Thyroid gland (tissue), 4 donors: ENCODE measurements at regions of chr19 and their contacts with region 1.

Region 1: GRCh38 chr19:15149737-15150136 is 42.5 kb downstream of the SYDE1 start:
- DNase-seq: no peak
- H3K4me3 ChIP-seq: no peak overlapping the region
- H3K27ac ChIP-seq: no peak overlapping the region
- H3K4me1 ChIP-seq: no peaks in the 10 kb centered on the region
- H3K27me3 ChIP-seq: no peaks in the 10 kb centered on the region
- CTCF ChIP-seq: no peak
- POLR2A ChIP-seq: no peak

Region 2: DNA sequence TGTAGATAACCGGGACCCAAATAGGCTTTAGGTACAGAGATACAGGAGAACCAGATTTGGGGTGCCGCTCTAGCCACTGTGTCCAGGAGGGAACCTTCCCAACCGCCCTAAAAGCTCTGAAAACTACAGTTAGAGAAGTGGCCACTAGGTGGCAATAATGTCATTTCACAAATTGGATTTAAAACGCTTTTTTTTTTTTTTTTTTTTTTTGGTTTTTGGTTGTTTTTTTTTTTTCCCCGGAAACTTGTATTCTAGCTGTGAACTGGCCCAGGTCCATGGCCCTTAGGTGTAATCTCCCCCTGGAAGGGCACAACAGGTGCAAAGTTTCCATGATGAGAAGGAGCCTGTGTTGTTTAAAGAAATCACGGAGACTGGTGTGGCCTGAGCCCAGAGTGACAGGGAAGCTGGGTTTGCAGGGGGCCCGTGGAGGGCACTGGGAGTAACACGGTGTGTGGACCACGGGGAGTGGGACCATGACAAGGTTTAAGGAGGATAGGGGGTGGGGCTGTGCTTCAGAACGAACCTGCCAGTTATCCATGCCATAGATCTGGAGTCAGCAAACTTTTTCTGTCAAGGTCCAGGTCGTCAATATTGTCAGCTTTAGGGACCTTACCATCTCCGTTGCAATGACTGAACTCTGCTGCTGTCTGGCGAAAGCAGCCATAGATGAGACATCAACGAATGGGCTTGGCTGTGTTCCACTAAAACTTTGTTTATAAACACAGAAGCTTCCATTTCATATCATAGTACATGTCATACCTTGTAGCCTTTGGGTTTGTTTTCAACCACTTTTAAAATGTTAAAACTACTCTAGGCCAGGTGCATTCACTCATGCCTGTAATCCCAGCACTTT is 57.6 kb before region 1 on chr19:
- intact Hi-C with region 1: loop called (anchors 2 kb)
- DNase-seq: peak; percentile 19 to 24
- H3K4me3 ChIP-seq: no peak overlapping the region
- H3K27ac ChIP-seq: no peak overlapping the region
- H3K4me1 ChIP-seq: no peaks in the 10 kb centered on the region
- H3K27me3 ChIP-seq: no peaks in the 10 kb centered on the region
- CTCF ChIP-seq: peak; percentile 34 to 82 (median 62)
- POLR2A ChIP-seq: no peak